Activated T-helper 1 cell treated with anti-CD3 and anti-CD28 coated beads, Interleukin-12 subunit alpha, Interleukin-12 subunit beta, Interleukin-2, Interleukin-4 antibody, amounts not matched to agents 30 ng/mL and 10 ng/mL and 1 ng/mL, durations not matched to agents 14 hours and 24 hours and 36 hours (primary cell): ENCODE measurements at regions of chr19 and their contacts with region 1.

Region 1: GRCh38 chr19:17873786-17874757 is 2.3 kb downstream of the SLC5A5 start:
- DNase-seq: peak; percentile 50
- H3K4me3 Mint-ChIP-seq: peak overlapping the region; percentile 86
- H3K27ac Mint-ChIP-seq: no peak overlapping the region
- H3K4me1 Mint-ChIP-seq: peaks cover 4% of the 10 kb centered on the region
- H3K27me3 Mint-ChIP-seq: no peaks in the 10 kb centered on the region

Region 2: DNA sequence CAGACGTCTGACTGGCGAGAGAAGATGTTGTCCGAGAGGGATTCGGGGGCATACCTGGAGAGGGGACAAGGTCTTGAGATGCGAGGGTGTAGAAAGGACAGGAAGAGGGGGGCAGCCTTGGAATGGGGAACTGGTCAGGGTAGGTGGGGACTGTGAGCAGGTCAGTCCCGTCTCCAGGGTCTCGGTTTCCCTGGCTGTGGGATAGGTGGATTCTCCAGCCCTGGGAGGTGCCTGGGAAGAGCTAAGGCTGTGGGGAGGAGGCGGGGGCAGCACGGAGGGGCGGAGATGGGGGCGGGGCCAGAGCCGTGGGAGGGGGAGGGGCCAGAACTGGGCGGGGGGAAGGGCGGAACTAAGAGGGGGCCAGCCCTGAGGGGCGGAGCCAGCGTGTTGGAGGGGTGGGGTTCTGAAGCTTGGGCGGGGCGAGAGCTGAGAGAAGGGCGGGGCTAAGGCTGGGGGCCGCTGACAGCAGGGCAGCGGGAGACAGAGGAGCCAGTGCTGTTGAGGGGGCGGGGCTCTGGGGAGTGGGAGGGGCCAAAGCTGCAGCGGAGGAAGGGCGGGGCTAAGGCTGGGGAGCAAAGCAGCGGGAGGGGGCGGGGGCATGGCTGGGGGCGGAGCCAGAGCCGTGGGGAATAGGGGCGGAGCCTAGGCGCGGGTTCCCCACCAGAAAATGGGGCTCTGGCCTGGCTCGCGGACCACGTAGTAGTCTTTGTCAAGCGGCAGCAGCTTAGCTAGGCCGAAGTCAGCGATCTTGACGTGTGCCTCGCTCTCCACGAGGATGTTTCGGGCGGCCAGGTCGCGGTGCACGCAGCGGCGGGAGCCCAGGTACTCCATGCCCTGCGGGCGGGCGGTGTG is 43.3 kb before region 1 on chr19:
- intact Hi-C with region 1: loop called (anchors 1 kb)
- DNase-seq: peak; percentile 12
- H3K4me3 Mint-ChIP-seq: no peak overlapping the region
- H3K27ac Mint-ChIP-seq: no peak overlapping the region
- H3K4me1 Mint-ChIP-seq: peaks cover 11% of the 10 kb centered on the region
- H3K27me3 Mint-ChIP-seq: no peaks in the 10 kb centered on the region

Region 3: DNA sequence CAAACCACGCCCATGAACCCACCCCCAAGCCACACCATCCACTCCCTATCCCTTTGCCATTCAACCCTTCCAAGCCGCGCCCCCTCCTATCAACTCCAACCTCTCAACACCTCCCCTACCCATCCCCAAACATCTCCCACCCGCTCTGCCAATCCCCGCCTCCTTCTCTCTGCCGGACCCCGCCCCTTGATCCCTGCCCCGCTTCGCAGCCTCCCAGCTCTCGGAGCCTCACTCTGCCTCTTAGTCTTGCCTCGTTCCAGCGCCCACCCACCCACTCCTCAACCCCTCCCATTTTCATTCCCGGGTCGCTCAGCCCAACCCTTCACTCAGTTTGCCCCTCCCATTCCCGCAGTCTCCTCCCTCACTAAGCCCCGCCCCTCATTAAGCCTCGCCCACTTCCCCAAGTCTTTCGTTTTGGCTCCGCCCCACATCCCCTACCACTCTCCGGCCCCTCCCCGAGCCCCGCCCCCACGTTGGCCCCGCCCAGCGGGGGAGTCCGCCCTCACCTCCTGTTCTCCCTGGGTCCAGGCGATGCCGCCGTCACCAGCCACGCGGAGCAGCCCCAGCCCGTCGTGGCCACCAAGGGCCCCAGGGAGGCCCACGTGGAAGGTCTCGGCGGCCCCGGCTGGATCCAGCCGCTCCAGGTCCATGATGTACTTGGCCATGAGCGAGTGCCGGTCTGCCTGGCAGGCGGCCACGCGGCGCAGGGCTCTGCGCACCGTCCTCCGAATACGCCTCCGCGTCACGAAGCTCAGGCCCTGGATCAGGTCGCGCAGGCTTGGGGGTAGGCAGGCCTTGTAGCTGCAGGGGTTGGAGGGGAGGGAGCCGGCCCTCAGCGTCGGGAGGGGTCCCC is 32.0 kb before region 1 on chr19:
- intact Hi-C with region 1: loop called (anchors 1 kb)
- DNase-seq: peak; percentile 46
- H3K4me3 Mint-ChIP-seq: no peak overlapping the region
- H3K27ac Mint-ChIP-seq: no peak overlapping the region
- H3K4me1 Mint-ChIP-seq: peaks cover 40% of the 10 kb centered on the region
- H3K27me3 Mint-ChIP-seq: no peaks in the 10 kb centered on the region

Region 4: DNA sequence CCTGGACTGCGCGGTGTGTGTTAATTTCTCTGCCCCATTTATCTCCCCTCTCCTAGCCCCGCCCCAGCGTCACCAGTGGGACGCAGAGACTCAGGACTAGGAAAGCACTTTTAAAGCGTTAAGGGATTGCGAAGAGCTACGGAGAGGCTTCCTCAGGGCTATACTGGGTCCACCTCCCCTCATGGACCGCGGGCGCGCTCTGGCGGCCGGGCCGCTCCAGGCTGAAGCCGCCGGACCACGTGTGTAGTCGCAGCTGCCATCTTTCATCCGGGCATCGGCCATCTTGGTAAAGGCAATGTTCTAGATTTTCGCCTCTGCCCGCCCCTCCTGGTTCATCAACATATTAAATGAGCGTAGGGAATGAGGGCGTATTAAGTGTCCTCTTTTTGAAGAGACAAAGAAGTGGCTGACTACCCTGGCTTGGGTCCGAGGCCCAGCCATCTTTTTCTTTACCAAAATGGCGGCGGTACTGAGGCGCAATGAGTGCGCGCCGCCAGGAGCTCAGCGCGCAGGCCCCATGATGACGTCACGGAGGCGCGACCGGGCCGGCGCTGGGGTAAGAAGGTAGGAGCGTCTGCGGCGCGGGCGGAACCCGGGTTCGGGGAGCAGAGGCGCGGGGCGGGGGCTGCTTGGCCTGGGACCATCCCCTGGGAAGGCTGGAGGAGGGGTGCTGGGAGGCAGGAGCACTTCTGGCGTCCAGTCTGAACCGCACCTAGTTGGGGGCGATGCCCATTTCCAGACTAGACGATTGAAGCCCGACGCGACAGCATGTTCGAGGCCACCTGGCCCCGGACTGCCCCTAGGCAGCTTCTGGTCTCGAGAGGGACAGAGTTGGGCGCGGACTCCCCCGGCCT is 58.6 kb after region 1 on chr19 and contains the start of gene CCDC124:
- intact Hi-C with region 1: loop called (anchors 1 kb)
- DNase-seq: peak; percentile 89
- H3K4me3 Mint-ChIP-seq: peak within 1 kb of the TSS; percentile 87
- H3K27ac Mint-ChIP-seq: peak within 1 kb of the TSS; percentile 82
- H3K4me1 Mint-ChIP-seq: peaks cover 21% of the 10 kb centered on the region
- H3K27me3 Mint-ChIP-seq: no peaks in the 10 kb centered on the region
- total RNA-seq, gene CCDC124: 122 and 128 TPM in 2 replicates

Region 5: GRCh38 chr19:18000935-18001778 is 127.1 kb after region 1 on chr19:
- intact Hi-C with region 1: loop called (anchors 5 kb)
- DNase-seq: peak; percentile 86
- H3K4me3 Mint-ChIP-seq: peak overlapping the region; percentile 92
- H3K27ac Mint-ChIP-seq: peak overlapping the region; percentile 95
- H3K4me1 Mint-ChIP-seq: peaks cover 27% of the 10 kb centered on the region
- H3K27me3 Mint-ChIP-seq: peaks cover 2% of the 10 kb centered on the region